CD8-positive, alpha-beta T cell (primary cell): ENCODE measurements at regions of chr3 and their contacts with region 1.

Region 1: GRCh38 chr3:32018757-32019564 is 37.4 kb downstream of the ZNF860 start:
- DNase-seq: peak in 2 of 9 experiments; percentile 47 to 61
- ATAC-seq: peak; percentile 48
- H3K4me3 ChIP-seq: no peak overlapping the region
- H3K4me3 Mint-ChIP-seq: no peak overlapping the region
- H3K27ac ChIP-seq: no peak overlapping the region
- H3K27ac Mint-ChIP-seq: no peak overlapping the region
- H3K4me1 ChIP-seq: no peaks in the 10 kb centered on the region
- H3K4me1 Mint-ChIP-seq: no peaks in the 10 kb centered on the region
- H3K27me3 ChIP-seq: no peaks in the 10 kb centered on the region
- H3K27me3 Mint-ChIP-seq: peaks cover 2% of the 10 kb centered on the region
- CTCF ChIP-seq: peak; percentile 90

Region 2: DNA sequence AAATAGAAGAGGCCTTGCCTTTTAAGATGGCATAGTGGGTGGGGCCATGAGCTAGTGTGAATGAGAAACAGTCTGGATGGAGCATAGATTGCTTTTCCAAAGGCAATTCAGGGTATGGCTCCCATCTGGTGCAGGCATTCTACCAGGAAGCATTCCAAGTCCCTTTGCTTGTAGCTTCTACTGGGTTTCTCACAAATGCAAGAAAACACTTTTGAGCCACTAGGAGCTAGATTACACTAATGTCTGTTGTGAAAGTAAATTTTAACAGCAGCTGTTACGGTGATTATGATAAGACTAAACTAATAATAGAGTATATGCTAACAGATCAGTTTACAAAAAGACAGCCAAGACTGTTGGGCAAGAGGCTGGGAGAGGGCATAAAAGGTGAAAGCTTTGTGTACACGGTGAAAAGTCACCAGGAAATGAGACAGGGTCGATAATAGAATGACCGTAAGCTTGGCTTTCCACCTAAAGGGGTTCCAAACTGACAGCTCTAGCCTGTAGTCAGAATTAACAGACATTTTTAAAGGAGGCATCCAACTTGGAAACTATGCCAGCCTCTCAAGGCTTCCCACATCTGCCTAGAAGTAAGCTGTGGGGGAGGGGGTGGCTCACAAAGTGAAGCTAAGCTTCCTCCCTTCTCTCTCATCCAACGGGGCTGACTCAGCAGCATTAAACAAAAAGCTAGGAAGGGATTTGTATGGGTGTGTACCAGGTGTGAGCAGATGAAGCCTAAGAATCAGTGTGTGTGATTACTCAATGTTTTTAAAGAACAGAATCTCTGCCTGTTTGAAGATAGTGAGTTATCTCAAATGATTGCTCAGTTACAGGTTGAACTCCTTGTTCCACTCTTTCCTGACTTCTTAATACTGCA is 26.4 kb after region 1 on chr3:
- CTCF ChIA-PET with region 1: no interaction called
- POLR2A ChIA-PET with region 1: no interaction called
- intact Hi-C with region 1: no loop called
- DNase-seq: no peak
- ATAC-seq: no peak
- H3K4me3 ChIP-seq: no peak overlapping the region
- H3K4me3 Mint-ChIP-seq: no peak overlapping the region
- H3K27ac ChIP-seq: no peak overlapping the region
- H3K27ac Mint-ChIP-seq: no peak overlapping the region
- H3K4me1 ChIP-seq: no peaks in the 10 kb centered on the region
- H3K4me1 Mint-ChIP-seq: no peaks in the 10 kb centered on the region
- H3K27me3 ChIP-seq: no peaks in the 10 kb centered on the region
- H3K27me3 Mint-ChIP-seq: no peaks in the 10 kb centered on the region
- CTCF ChIP-seq: no peak

Region 3: GRCh38 chr3:32126305-32127015 is 107.5 kb after region 1 on chr3:
- CTCF ChIA-PET with region 1: interaction called, 17 read pairs
- POLR2A ChIA-PET with region 1: no interaction called
- intact Hi-C with region 1: no loop called
- DNase-seq: no peak
- ATAC-seq: no peak
- H3K4me3 ChIP-seq: no peak overlapping the region
- H3K4me3 Mint-ChIP-seq: no peak overlapping the region
- H3K27ac ChIP-seq: no peak overlapping the region
- H3K27ac Mint-ChIP-seq: no peak overlapping the region
- H3K4me1 ChIP-seq: no peaks in the 10 kb centered on the region
- H3K4me1 Mint-ChIP-seq: peaks cover 19% of the 10 kb centered on the region
- H3K27me3 ChIP-seq: no peaks in the 10 kb centered on the region
- H3K27me3 Mint-ChIP-seq: no peaks in the 10 kb centered on the region
- CTCF ChIP-seq: no peak

Region 4: DNA sequence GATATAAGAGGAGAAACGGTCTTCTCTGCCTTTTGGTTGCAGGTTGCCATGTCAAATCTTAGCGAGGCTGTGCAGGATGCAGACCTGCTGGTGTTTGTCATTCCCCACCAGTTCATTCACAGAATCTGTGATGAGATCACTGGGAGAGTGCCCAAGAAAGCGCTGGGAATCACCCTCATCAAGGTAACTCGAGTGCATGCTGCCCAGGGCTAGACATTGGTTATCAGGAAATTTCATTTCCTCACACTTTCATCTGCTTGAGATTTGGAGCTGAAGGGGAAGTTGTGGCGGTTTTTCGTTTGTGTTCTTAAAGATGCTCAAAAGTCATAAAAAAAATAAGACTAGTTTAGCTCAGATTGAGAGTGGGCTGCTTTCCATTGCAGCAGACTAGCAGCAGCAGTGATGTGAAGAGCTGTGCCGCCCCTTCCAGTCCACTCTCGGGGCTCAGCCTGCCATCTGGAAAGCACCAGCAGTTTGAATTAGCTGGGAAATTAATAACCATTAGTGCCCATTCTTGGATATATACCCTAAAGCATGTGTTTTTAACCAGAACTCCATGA is 119.7 kb after region 1 on chr3:
- CTCF ChIA-PET with region 1: interaction called, 93 read pairs
- POLR2A ChIA-PET with region 1: interaction called, 7 read pairs
- intact Hi-C with region 1: no loop called
- DNase-seq: peak in 2 of 9 experiments; percentile 8 to 39
- ATAC-seq: peak; percentile 23
- H3K4me3 ChIP-seq: no peak overlapping the region
- H3K4me3 Mint-ChIP-seq: peak overlapping the region; percentile 19
- H3K27ac ChIP-seq: no peak overlapping the region
- H3K27ac Mint-ChIP-seq: no peak overlapping the region
- H3K4me1 ChIP-seq: peaks cover 14% of the 10 kb centered on the region
- H3K4me1 Mint-ChIP-seq: peaks cover 20% of the 10 kb centered on the region
- H3K27me3 ChIP-seq: no peaks in the 10 kb centered on the region
- H3K27me3 Mint-ChIP-seq: no peaks in the 10 kb centered on the region
- CTCF ChIP-seq: no peak

Region 5: GRCh38 chr3:32154205-32154579 is 135.2 kb after region 1 on chr3:
- CTCF ChIA-PET with region 1: interaction called, 15 read pairs
- POLR2A ChIA-PET with region 1: no interaction called
- intact Hi-C with region 1: no loop called
- DNase-seq: no peak
- ATAC-seq: no peak
- H3K4me3 ChIP-seq: no peak overlapping the region
- H3K4me3 Mint-ChIP-seq: no peak overlapping the region
- H3K27ac ChIP-seq: no peak overlapping the region
- H3K27ac Mint-ChIP-seq: no peak overlapping the region
- H3K4me1 ChIP-seq: no peaks in the 10 kb centered on the region
- H3K4me1 Mint-ChIP-seq: no peaks in the 10 kb centered on the region
- H3K27me3 ChIP-seq: no peaks in the 10 kb centered on the region
- H3K27me3 Mint-ChIP-seq: no peaks in the 10 kb centered on the region
- CTCF ChIP-seq: no peak

Region 6: GRCh38 chr3:32334675-32335074 is 315.7 kb after region 1 on chr3:
- CTCF ChIA-PET with region 1: interaction called, 4 read pairs
- POLR2A ChIA-PET with region 1: no interaction called
- intact Hi-C with region 1: loop called in 1 of 2 experiments (anchors 5 kb)
- DNase-seq: peak in 8 of 9 experiments; percentile 29 to 66 (median 37)
- ATAC-seq: peak; percentile 81
- H3K4me3 ChIP-seq: no peak overlapping the region
- H3K4me3 Mint-ChIP-seq: no peak overlapping the region
- H3K27ac ChIP-seq: no peak overlapping the region
- H3K27ac Mint-ChIP-seq: peak overlapping the region; percentile 89
- H3K4me1 ChIP-seq: peaks cover 18% of the 10 kb centered on the region
- H3K4me1 Mint-ChIP-seq: peaks cover 28% of the 10 kb centered on the region
- H3K27me3 ChIP-seq: no peaks in the 10 kb centered on the region
- H3K27me3 Mint-ChIP-seq: no peaks in the 10 kb centered on the region
- CTCF ChIP-seq: no peak

Region 7: GRCh38 chr3:32340039-32340438 is 321.1 kb after region 1 on chr3:
- CTCF ChIA-PET with region 1: interaction called, 4 read pairs
- POLR2A ChIA-PET with region 1: no interaction called
- intact Hi-C with region 1: loop called (anchors 2 to 5 kb)
- DNase-seq: peak in 6 of 9 experiments; percentile 21 to 64 (median 40)
- ATAC-seq: peak; percentile 78
- H3K4me3 ChIP-seq: no peak overlapping the region
- H3K4me3 Mint-ChIP-seq: no peak overlapping the region
- H3K27ac ChIP-seq: no peak overlapping the region
- H3K27ac Mint-ChIP-seq: no peak overlapping the region
- H3K4me1 ChIP-seq: peaks cover 13% of the 10 kb centered on the region
- H3K4me1 Mint-ChIP-seq: peaks cover 17% of the 10 kb centered on the region
- H3K27me3 ChIP-seq: no peaks in the 10 kb centered on the region
- H3K27me3 Mint-ChIP-seq: no peaks in the 10 kb centered on the region
- CTCF ChIP-seq: peak; percentile 66

Region 8: DNA sequence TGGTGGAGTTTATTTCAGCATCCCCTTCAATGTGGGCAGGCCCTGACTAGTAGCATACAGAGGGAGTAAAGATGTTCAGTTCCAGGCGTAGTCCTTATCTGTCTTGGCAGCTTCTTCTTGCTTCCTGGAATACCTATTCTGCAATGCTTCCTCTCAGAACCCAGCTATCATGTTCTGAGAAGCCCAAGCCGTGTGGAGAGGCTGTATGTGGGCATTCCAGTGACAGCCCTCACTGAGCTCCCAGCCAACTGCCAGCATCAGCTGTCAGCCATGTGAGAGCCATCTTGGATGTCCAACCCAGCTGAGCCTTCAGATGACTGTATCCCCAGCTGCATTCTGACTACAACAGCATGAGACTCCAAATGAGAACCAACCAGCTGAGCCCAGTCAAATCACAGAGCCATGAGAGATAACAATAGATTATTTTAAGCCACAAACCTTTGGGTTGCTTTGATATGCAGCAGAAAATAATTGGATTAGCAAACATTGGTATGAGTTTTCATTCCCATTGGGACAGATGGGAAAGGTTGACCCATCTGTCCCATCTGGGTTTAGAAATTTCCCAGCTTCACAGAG is 364.3 kb after region 1 on chr3:
- CTCF ChIA-PET with region 1: no interaction called
- POLR2A ChIA-PET with region 1: no interaction called
- intact Hi-C with region 1: no loop called
- DNase-seq: no peak
- ATAC-seq: no peak
- H3K4me3 ChIP-seq: no peak overlapping the region
- H3K4me3 Mint-ChIP-seq: no peak overlapping the region
- H3K27ac ChIP-seq: no peak overlapping the region
- H3K27ac Mint-ChIP-seq: no peak overlapping the region
- H3K4me1 ChIP-seq: no peaks in the 10 kb centered on the region
- H3K4me1 Mint-ChIP-seq: no peaks in the 10 kb centered on the region
- H3K27me3 ChIP-seq: no peaks in the 10 kb centered on the region
- H3K27me3 Mint-ChIP-seq: no peaks in the 10 kb centered on the region
- CTCF ChIP-seq: no peak